ENCODE measurements at regions of chr10 and their contacts with region 1.

Region 1: GRCh38 chr10:115129752-115130151 is 36.6 kb downstream of the ATRNL1 start:
- DNase-seq: peak; percentile 10
- ATAC-seq: no peak
- H3K4me3 ChIP-seq: no peak overlapping the region
- H3K27ac ChIP-seq: no peak overlapping the region
- H3K4me1 ChIP-seq: no peaks in the 10 kb centered on the region
- H3K27me3 ChIP-seq: no peaks in the 10 kb centered on the region
- CTCF ChIP-seq: no peak
- EP300 ChIP-seq: no peak
- POLR2A ChIP-seq: no peak
- RAD21 ChIP-seq: no peak

Region 2: DNA sequence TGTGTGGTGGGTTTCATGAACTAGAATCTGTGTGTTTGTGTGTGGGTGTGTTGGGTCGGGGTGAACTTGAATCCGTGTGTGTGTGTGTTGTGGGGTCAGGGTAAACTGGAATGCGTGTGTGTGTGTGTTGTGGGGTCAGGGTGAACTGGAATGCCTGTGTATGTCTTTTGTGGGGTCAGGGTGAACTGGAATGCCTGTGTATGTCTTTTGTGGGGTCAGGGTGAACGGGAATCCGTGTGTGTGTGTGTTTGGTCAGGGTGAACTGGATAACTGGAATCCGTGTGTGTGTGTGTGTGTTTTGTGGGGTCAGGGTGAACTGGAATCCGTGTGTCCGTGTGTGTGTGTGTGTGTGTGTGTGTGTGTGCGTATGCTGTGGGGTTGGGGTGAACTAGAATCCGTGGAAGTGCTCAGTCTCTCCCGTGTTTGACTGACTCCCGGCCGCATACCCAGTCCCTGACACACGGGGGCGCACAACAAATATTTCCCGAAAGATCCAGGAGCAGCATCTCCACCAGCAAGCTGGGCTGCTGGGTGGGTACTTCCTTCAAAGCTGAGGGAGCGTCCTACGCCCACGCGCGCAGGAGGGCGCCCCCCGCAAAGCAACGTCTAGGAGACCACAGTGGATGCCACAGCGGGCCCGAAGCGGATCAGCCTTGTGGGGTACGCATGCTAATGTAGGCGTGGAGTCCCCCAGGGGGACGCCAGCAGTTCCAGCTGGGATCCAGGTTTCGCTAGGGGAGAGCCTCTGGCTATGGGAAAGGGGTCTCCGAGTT is 1450.9 kb before region 1 on chr10:
- CTCF ChIA-PET with region 1: no interaction called
- POLR2A ChIA-PET with region 1: no interaction called
- in situ Hi-C with region 1: no loop called
- intact Hi-C with region 1: loop called (anchors 5 kb)
- DNase-seq: peak; percentile 66
- ATAC-seq: peak; percentile 76
- H3K4me3 ChIP-seq: peak overlapping the region; percentile 90 to 95 (median 94)
- H3K27ac ChIP-seq: peak overlapping the region; percentile 85
- H3K4me1 ChIP-seq: peaks cover 26% of the 10 kb centered on the region
- H3K27me3 ChIP-seq: no peaks in the 10 kb centered on the region; a peak in 1 of 5 replicates
- CTCF ChIP-seq: peak; percentile 86
- EP300 ChIP-seq: 0 out of 4 replicates have a peak, but pooled peaks of 1 of the 2 experiments have one; percentile 24
- POLR2A ChIP-seq: 0 out of 4 replicates have a peak, but pooled peaks of 1 of the 2 experiments have one; percentile 34
- RAD21 ChIP-seq: peak; percentile 26; the same call in 1 of the 2 replicates

Region 3: GRCh38 chr10:114304017-114304570 is 825.7 kb before region 1 on chr10:
- CTCF ChIA-PET with region 1: interaction called, 10 read pairs
- POLR2A ChIA-PET with region 1: no interaction called
- in situ Hi-C with region 1: loop called (anchors 25 kb)
- intact Hi-C with region 1: no loop called
- DNase-seq: peak; percentile 62
- ATAC-seq: peak; percentile 86
- H3K4me3 ChIP-seq: no peak overlapping the region
- H3K27ac ChIP-seq: no peak overlapping the region
- H3K4me1 ChIP-seq: peaks cover 5% of the 10 kb centered on the region; the same call in 1 of the 2 replicates
- H3K27me3 ChIP-seq: peaks cover 2 to 46% of the 10 kb centered on the region in 2 experiments
- CTCF ChIP-seq: peak; percentile 89
- EP300 ChIP-seq: no peak
- POLR2A ChIP-seq: no peak
- RAD21 ChIP-seq: peak; percentile 68

Region 4: DNA sequence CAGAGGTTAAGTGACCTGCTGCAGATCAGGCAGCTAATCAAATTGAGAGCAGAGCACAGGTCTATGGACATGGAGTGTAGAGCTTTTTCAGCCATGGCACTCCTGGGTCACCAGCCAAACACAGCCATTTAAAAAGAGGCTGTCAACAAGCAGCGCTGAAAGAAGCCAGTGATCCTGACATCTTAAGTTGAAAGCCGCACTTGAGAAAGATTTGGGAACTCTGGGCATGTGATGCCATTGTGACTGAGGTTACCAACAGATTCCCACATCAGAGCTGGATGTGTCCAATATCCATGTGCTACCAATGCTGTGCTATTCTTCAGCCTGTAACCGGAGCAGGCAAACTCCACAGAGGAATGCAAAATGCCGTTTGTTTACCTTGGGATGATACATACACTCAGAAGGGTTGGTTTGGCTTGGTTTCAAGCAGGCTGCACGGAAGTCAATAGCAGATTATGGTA is 415.4 kb before region 1 on chr10:
- CTCF ChIA-PET with region 1: no interaction called
- POLR2A ChIA-PET with region 1: no interaction called
- in situ Hi-C with region 1: no loop called
- intact Hi-C with region 1: loop called (anchors 10 kb)
- DNase-seq: peak; percentile 81
- ATAC-seq: peak; percentile 94
- H3K4me3 ChIP-seq: no peak overlapping the region
- H3K27ac ChIP-seq: no peak overlapping the region
- H3K4me1 ChIP-seq: peaks cover 24% of the 10 kb centered on the region
- H3K27me3 ChIP-seq: no peaks in the 10 kb centered on the region; a peak in 2 of 5 replicates
- CTCF ChIP-seq: no peak
- EP300 ChIP-seq: no peak
- POLR2A ChIP-seq: no peak
- RAD21 ChIP-seq: no peak